ENCODE measurements at regions of chr12 and their contacts with region 1.

Region 1: DNA sequence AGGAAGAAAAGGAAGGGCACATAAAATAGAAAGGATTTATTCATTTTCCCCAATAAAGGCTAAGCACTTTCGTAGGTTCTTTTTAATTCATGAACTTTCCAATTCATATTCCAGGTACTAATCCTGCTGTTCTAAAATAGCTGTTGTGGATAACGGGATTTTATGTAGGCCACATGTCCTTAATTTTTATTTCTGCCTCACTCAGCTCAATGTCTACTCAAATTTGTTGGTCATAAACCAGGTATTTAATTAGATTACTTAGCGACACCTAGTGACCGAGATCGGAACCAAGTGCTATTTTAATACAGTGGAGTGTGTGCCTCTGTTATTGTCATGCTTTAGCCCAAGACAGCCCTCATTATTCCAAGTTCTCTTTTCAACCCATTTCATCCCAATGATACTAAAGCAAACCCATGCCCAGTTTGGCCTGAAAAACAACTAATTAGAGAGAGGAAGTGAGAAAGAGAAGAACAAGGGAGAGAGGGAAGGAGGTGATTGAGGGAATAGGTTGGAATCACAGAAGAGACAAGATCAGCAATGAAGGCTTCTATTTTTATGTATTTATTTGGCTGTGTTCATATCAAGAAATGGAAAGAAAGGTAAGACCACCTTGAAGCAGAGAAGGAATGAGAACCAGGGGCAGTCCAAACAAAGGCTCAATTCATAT is 45.9 kb upstream of the IFNG-AS1 start:
- DNase-seq: peak; percentile 78
- H3K4me3 ChIP-seq: no peak overlapping the region
- H3K27ac ChIP-seq: no peak overlapping the region
- H3K4me1 ChIP-seq: peaks cover 2% of the 10 kb centered on the region
- H3K27me3 ChIP-seq: no peaks in the 10 kb centered on the region
- CTCF ChIP-seq: peak; percentile 60 to 80 (median 77)
- POLR2A ChIP-seq: no peak

Region 2: GRCh38 chr12:67355578-67356379 is 587.6 kb before region 1 on chr12:
- intact Hi-C with region 1: loop called (anchors 2 kb)
- DNase-seq: no peak
- H3K4me3 ChIP-seq: no peak overlapping the region
- H3K27ac ChIP-seq: no peak overlapping the region
- H3K4me1 ChIP-seq: no peaks in the 10 kb centered on the region
- H3K27me3 ChIP-seq: no peaks in the 10 kb centered on the region
- CTCF ChIP-seq: peak in 3 of 4 experiments; percentile 34 to 48 (median 34)
- POLR2A ChIP-seq: no peak

Region 3: DNA sequence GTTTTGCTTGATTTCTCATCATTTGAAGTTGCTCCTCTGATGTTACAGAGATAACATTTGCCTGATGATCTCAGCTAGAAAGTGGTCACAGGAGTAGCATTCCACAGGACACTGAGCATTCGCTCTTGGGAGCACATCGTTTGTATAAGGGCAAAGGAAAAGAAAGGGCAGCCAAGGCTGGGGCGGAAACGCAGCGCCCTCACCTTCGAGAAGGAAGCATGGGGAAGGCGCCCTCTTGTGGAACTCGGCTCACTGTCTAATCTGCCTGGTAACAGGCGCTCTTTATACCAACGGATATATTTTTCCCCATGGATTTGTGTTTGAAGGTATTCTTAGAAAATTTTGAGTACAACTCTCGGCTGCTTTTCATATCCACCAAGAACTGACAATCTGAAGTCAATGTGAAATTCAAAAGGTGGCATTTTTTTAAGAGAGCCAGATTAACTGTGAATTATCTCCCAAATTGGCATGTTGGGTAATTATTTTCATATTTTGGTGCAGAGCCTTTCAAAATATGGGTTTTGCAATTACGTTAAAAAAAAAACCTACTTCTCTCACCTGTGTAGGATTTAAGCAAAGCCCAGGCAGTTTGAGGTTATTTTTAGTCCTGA is 501.5 kb before region 1 on chr12:
- intact Hi-C with region 1: loop called (anchors 5 kb)
- DNase-seq: peak; percentile 61
- H3K4me3 ChIP-seq: no peak overlapping the region
- H3K27ac ChIP-seq: no peak overlapping the region
- H3K4me1 ChIP-seq: no peaks in the 10 kb centered on the region
- H3K27me3 ChIP-seq: no peaks in the 10 kb centered on the region
- CTCF ChIP-seq: peak; percentile 30 to 72 (median 62)
- POLR2A ChIP-seq: no peak

Region 4: GRCh38 chr12:67716817-67717216 is 226.5 kb before region 1 on chr12:
- intact Hi-C with region 1: loop called (anchors 5 kb)
- DNase-seq: no peak
- H3K4me3 ChIP-seq: no peak overlapping the region
- H3K27ac ChIP-seq: no peak overlapping the region
- H3K4me1 ChIP-seq: no peaks in the 10 kb centered on the region
- H3K27me3 ChIP-seq: no peaks in the 10 kb centered on the region
- CTCF ChIP-seq: no peak
- POLR2A ChIP-seq: no peak

Region 5: DNA sequence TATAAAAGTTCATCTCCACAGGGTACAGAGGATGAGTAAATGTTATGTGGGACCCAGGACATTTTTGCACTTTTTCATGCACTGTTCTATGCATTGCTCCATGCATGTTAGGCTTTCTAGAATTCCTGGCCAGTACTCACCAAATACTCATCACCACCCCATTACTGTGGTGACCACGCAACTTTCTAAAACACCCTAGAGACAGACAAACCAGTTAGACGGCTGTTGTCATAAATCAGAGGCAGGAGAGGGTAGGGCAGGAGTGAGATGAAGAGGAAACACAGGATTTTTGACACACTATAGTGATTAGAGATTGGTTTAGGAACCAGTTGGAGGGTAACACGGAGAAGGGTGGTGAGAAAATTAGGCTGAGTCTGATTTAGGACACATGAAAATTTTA is 156.9 kb after region 1 on chr12:
- intact Hi-C with region 1: no loop called
- DNase-seq: no peak
- H3K4me3 ChIP-seq: no peak overlapping the region
- H3K27ac ChIP-seq: no peak overlapping the region
- H3K4me1 ChIP-seq: no peaks in the 10 kb centered on the region
- H3K27me3 ChIP-seq: peaks cover 3% of the 10 kb centered on the region
- CTCF ChIP-seq: no peak
- POLR2A ChIP-seq: no peak